Activated CD4-positive, alpha-beta T cell treated with anti-CD3 and anti-CD28 coated beads for 36 hours (primary cell): ENCODE measurements at regions of chr20 and their contacts with region 1.

Region 1: DNA sequence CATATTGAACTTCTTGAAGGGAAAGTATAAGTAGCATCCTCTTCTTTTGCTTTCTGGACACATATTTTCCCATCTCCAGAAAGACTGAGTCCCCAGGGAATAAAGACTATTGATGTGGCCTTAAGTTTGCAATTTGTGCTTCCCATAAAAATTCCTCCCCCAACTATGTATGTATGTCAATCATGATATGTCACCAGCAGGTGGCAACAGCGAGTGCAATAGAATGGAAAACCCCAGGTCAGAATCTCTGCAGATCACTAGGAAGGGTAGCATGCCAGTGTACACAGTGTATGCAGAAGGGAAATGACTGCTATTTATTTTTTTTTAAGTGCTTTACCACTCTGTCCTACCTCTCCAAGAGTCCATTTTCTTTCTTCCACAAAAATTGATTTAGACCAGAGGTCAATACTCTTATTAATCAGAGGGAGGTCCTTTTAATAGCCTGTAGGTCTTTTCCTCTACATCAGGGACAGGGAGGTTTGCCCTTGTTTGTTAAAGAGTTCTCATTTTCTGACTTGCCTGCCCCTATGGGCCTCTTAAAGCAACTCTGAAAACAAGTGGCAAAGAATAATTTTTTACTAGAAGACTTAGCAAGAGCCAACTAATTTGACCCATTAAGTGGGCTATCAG is 61.4 kb downstream of the BMP2 start:
- DNase-seq: peak; percentile 67
- ATAC-seq: peak; percentile 55
- H3K4me3 Mint-ChIP-seq: no peak overlapping the region
- H3K27ac Mint-ChIP-seq: no peak overlapping the region
- H3K4me1 Mint-ChIP-seq: no peaks in the 10 kb centered on the region
- H3K27me3 Mint-ChIP-seq: no peaks in the 10 kb centered on the region

Region 2: DNA sequence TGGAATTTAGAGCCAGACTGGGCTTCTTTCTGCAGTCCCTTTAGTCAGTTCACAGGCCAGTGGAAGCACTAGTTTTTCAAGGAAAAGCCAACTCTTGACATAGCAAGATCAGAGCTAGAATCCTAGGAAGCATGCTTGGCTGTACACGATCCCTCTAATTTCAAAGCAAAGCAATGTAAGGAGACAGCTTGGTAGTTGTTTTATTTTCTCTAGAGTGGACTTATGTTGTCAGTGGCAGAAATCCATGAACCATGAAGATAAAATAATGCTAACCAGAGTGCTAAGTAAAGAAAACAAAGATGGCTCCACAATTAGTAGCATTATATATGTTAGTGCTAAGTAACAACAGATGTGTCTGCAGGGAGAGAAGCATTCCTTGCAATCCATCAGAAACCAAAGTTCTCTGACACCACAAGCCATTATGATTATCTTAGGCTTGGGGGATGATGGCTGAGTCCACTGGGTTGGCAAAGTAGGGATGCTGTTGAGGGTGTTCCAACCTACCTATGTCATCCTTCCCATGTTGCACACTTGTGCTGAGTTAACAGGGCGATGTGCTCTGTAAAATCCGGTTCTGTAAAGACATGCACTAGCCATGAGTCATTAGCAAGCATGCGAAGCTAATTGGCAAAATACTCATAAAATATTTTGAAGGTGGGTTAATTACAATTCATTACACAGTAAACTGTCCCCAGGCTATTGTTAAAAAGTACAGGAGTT is 53.8 kb after region 1 on chr20:
- CTCF ChIA-PET with region 1: no interaction called
- POLR2A ChIA-PET with region 1: no interaction called
- intact Hi-C with region 1: loop called in 1 of 2 experiments (anchors 5 kb)
- DNase-seq: no peak
- ATAC-seq: no peak
- H3K4me3 Mint-ChIP-seq: no peak overlapping the region
- H3K27ac Mint-ChIP-seq: no peak overlapping the region
- H3K4me1 Mint-ChIP-seq: no peaks in the 10 kb centered on the region
- H3K27me3 Mint-ChIP-seq: peaks cover 1% of the 10 kb centered on the region

Region 3: DNA sequence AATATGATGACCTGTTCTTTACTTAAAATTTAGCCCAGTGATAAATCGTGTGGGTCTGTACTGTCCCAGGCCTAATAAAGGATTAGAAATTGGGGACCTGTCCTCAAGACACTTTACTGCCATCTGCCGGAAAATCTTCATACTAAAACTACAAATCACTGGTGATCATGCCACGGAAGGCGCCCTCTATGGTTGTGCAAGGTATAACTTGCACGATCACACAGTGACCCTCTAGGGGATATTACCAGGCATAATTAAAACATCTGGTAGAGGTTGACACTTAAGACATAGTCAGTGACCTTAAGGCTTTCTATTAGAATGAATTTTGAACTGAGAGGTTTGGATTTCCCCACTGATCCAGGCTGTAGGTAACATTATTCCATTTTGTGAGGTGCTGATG is 111.1 kb after region 1 on chr20:
- CTCF ChIA-PET with region 1: no interaction called
- POLR2A ChIA-PET with region 1: no interaction called
- intact Hi-C with region 1: no loop called
- DNase-seq: peak; percentile 8
- ATAC-seq: no peak
- H3K4me3 Mint-ChIP-seq: no peak overlapping the region
- H3K27ac Mint-ChIP-seq: no peak overlapping the region
- H3K4me1 Mint-ChIP-seq: no peaks in the 10 kb centered on the region
- H3K27me3 Mint-ChIP-seq: no peaks in the 10 kb centered on the region

Region 4: GRCh38 chr20:7094438-7094997 is 265.6 kb after region 1 on chr20:
- CTCF ChIA-PET with region 1: no interaction called
- POLR2A ChIA-PET with region 1: no interaction called
- intact Hi-C with region 1: loop called (anchors 2 to 10 kb)
- DNase-seq: peak; percentile 40
- ATAC-seq: no peak
- H3K4me3 Mint-ChIP-seq: no peak overlapping the region
- H3K27ac Mint-ChIP-seq: no peak overlapping the region
- H3K4me1 Mint-ChIP-seq: no peaks in the 10 kb centered on the region
- H3K27me3 Mint-ChIP-seq: no peaks in the 10 kb centered on the region

Region 5: DNA sequence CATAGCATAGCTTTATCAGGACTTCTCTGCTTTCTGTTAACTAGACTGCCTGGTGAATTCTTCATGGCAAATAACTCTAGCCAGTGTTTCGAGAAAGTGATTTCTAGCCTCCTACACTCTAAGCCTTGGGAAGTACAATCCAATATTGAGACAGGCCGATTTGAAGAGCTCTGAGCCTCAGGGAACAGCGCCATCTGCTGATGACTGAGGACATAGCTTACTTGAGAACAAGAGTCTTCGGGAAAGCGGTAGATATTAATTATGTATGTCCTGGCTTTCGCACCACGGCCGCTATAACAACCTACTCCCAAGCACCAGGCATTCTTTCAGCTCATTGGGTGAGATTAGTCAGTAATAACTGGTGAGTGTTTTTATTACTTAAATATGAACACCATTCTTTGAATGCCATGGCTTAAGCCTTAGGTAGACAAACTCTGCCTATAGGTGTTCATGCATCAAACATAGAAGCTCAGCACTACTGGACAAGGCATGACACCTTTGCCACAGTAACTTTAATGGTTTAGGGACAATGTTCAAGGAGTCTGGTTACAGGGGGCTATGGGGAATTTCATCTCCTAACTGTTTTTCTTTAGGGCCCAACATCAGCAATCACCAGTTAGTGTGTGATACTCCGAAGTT is 457.1 kb after region 1 on chr20:
- CTCF ChIA-PET with region 1: interaction called, 3 read pairs
- POLR2A ChIA-PET with region 1: no interaction called
- intact Hi-C with region 1: loop called in 1 of 2 experiments (anchors 5 kb)
- DNase-seq: peak; percentile 62
- ATAC-seq: no peak
- H3K4me3 Mint-ChIP-seq: no peak overlapping the region
- H3K27ac Mint-ChIP-seq: no peak overlapping the region
- H3K4me1 Mint-ChIP-seq: no peaks in the 10 kb centered on the region
- H3K27me3 Mint-ChIP-seq: no peaks in the 10 kb centered on the region

Region 6: DNA sequence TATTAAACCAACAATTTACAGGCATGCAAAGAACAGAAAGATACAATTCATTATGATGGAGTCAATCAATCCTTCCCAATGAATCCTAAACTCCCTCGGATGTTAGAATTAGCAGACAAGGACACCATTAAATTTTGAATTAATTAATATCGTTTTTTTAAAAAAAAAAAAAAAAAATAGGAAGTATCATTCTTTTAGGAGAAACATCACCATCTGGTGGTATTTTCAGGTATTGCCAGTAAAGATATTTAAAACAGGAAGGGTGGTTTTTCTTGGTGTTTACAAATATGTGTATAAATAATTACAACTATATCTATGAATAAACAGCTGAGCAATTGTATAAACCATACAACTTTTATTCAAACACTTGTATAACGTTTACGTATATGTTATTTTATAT is 547.0 kb after region 1 on chr20:
- CTCF ChIA-PET with region 1: no interaction called
- POLR2A ChIA-PET with region 1: no interaction called
- intact Hi-C with region 1: loop called in 1 of 2 experiments (anchors 5 kb)
- DNase-seq: no peak
- ATAC-seq: no peak
- H3K4me3 Mint-ChIP-seq: no peak overlapping the region
- H3K27ac Mint-ChIP-seq: no peak overlapping the region
- H3K4me1 Mint-ChIP-seq: no peaks in the 10 kb centered on the region
- H3K27me3 Mint-ChIP-seq: no peaks in the 10 kb centered on the region